ENCODE measurements at regions of chr11 and their contacts with region 1.

Region 1: GRCh38 chr11:93652161-93652597 is 9.3 kb upstream of the CEP295 start:
- DNase-seq: no peak
- ATAC-seq: peak; percentile 24; the same call in 1 of the 3 replicates
- H3K4me3 ChIP-seq: no peak overlapping the region
- H3K27ac ChIP-seq: no peak overlapping the region
- H3K4me1 ChIP-seq: no peaks in the 10 kb centered on the region
- H3K27me3 ChIP-seq: no peaks in the 10 kb centered on the region
- CTCF ChIP-seq: peak; percentile 46 to 68 (median 63)
- EP300 ChIP-seq: no peak
- POLR2A ChIP-seq: no peak
- RAD21 ChIP-seq: peak; percentile 68

Region 2: GRCh38 chr11:92941676-92942571 is 710.3 kb before region 1 on chr11:
- CTCF ChIA-PET with region 1: interaction called, 8 read pairs
- POLR2A ChIA-PET with region 1: no interaction called
- RAD21 ChIA-PET with region 1: no interaction called
- SMC1A ChIA-PET with region 1: no interaction called
- in situ Hi-C with region 1: loop called (anchors 10 kb)
- intact Hi-C with region 1: loop called (anchors 5 kb)
- DNase-seq: no peak
- ATAC-seq: peak; percentile 80
- H3K4me3 ChIP-seq: no peak overlapping the region
- H3K27ac ChIP-seq: no peak overlapping the region
- H3K4me1 ChIP-seq: no peaks in the 10 kb centered on the region
- H3K27me3 ChIP-seq: no peaks in the 10 kb centered on the region; a peak in 1 of 4 replicates
- CTCF ChIP-seq: peak; percentile 58 to 76 (median 73); a peak in 5 of 6 replicates
- EP300 ChIP-seq: no peak
- POLR2A ChIP-seq: no peak
- RAD21 ChIP-seq: peak; percentile 83

Region 3: GRCh38 chr11:93131709-93132108 is 520.5 kb before region 1 on chr11:
- CTCF ChIA-PET with region 1: no interaction called
- POLR2A ChIA-PET with region 1: no interaction called
- RAD21 ChIA-PET with region 1: no interaction called
- SMC1A ChIA-PET with region 1: no interaction called
- in situ Hi-C with region 1: loop called (anchors 10 kb)
- intact Hi-C with region 1: no loop called
- DNase-seq: no peak
- ATAC-seq: no peak
- H3K4me3 ChIP-seq: no peak overlapping the region
- H3K27ac ChIP-seq: no peak overlapping the region
- H3K4me1 ChIP-seq: no peaks in the 10 kb centered on the region
- H3K27me3 ChIP-seq: no peaks in the 10 kb centered on the region
- CTCF ChIP-seq: peak in 1 of 3 experiments; percentile 33; a peak in 2 of 6 replicates
- EP300 ChIP-seq: no peak
- POLR2A ChIP-seq: no peak
- RAD21 ChIP-seq: peak; percentile 49

Region 4: DNA sequence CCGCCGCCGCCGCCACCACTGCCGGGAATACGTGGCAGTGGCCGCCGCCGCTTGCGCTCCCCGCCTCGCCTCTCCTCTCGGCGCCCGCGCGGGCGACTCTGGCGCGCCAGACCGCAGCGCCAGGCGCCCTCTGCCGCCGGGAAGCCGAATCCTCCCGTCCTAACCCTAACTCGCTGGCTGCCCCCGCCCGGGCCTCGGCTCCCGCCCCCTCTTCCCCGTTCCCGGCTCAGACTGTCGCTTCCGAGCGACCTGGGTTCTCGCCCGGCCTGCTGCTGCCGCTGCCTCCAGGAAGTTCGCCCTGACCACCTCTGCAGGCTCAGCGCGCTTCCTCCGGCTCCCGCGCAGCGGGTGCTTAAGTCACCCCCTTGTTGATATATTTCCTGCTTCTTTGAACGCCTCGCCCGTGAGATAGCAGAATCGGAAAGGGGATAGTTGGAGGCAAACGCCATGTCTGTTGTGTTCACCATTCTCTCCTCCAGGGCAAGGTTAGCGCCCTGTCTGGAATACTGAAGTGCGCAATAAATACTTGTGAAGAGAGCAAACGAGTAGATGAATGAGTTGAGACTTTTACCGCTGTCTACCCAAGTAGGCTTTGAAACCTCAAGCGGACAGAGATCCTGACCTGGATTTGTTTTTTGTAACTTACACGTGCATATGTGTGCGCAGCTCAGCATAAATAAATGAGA is 108.7 kb before region 1 on chr11 and contains the start of gene SMCO4:
- CTCF ChIA-PET with region 1: interaction called, 22 read pairs
- POLR2A ChIA-PET with region 1: no interaction called
- RAD21 ChIA-PET with region 1: interaction called, 6 read pairs
- SMC1A ChIA-PET with region 1: interaction called, 4 read pairs
- in situ Hi-C with region 1: no loop called
- intact Hi-C with region 1: loop called (anchors 2 kb)
- DNase-seq: no peak
- ATAC-seq: peak; percentile 78
- H3K4me3 ChIP-seq: peak within 1 kb of the TSS; percentile 91
- H3K27ac ChIP-seq: peak within 1 kb of the TSS; percentile 45
- H3K4me1 ChIP-seq: peaks cover 12% of the 10 kb centered on the region
- H3K27me3 ChIP-seq: no peaks in the 10 kb centered on the region
- CTCF ChIP-seq: peak; percentile 52 to 90 (median 73)
- EP300 ChIP-seq: no peak
- POLR2A ChIP-seq: peak; percentile 58
- RAD21 ChIP-seq: peak; percentile 82
- polyA plus RNA-seq, gene SMCO4: 3.6 to 8.1 TPM

Region 5: DNA sequence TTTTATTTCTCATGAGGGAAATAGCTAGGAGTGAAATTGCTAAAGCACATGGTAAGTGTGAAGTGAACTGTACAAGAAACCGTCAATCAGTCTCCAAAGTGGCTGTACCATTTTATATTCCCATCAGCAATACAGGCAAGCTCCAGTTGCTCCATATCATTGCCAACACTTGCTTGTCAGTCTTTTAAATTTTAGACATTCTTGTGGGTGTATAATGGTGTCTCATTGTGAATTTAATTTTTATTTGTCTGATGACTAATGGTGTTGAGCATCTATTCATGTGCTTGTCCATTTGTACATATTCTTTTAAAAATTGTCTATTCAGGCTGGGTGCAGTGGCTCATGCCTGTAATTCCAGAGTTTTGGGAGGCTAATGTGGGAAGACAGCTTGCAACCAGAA is 74.9 kb before region 1 on chr11:
- CTCF ChIA-PET with region 1: no interaction called
- POLR2A ChIA-PET with region 1: no interaction called
- RAD21 ChIA-PET with region 1: no interaction called
- SMC1A ChIA-PET with region 1: no interaction called
- in situ Hi-C with region 1: no loop called
- intact Hi-C with region 1: no loop called
- DNase-seq: no peak
- ATAC-seq: no peak
- H3K4me3 ChIP-seq: no peak overlapping the region
- H3K27ac ChIP-seq: no peak overlapping the region
- H3K4me1 ChIP-seq: no peaks in the 10 kb centered on the region
- H3K27me3 ChIP-seq: no peaks in the 10 kb centered on the region
- CTCF ChIP-seq: no peak
- EP300 ChIP-seq: no peak
- POLR2A ChIP-seq: no peak
- RAD21 ChIP-seq: no peak

Region 6: DNA sequence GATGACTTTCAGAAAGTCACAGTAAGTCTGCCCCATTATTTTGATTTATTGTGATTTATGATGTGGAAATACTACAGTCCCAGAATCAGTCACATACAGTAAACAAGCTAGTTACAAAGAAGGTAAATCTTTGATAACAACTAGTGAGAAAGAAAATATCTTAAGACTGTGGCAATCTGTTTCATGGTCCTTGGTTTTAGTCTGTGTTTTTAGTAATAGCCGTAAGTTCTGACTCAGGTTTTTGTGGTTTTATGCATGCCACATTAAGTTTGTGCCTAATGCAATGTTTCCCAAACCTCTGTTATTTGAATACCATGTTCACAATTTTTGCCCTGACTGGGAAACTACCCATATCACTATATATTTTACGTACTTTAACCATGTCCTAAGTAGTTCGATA is 16.0 kb after region 1 on chr11:
- CTCF ChIA-PET with region 1: interaction called, 13 read pairs
- POLR2A ChIA-PET with region 1: no interaction called
- RAD21 ChIA-PET with region 1: interaction called, 4 read pairs
- SMC1A ChIA-PET with region 1: interaction called, 13 read pairs
- in situ Hi-C with region 1: no loop called
- intact Hi-C with region 1: no loop called
- DNase-seq: no peak
- ATAC-seq: peak; percentile 60
- H3K4me3 ChIP-seq: no peak overlapping the region
- H3K27ac ChIP-seq: peak overlapping the region; percentile 31; the same call in 1 of the 2 replicates
- H3K4me1 ChIP-seq: no peaks in the 10 kb centered on the region
- H3K27me3 ChIP-seq: no peaks in the 10 kb centered on the region
- CTCF ChIP-seq: no peak
- EP300 ChIP-seq: no peak
- POLR2A ChIP-seq: no peak
- RAD21 ChIP-seq: no peak

Region 7: DNA sequence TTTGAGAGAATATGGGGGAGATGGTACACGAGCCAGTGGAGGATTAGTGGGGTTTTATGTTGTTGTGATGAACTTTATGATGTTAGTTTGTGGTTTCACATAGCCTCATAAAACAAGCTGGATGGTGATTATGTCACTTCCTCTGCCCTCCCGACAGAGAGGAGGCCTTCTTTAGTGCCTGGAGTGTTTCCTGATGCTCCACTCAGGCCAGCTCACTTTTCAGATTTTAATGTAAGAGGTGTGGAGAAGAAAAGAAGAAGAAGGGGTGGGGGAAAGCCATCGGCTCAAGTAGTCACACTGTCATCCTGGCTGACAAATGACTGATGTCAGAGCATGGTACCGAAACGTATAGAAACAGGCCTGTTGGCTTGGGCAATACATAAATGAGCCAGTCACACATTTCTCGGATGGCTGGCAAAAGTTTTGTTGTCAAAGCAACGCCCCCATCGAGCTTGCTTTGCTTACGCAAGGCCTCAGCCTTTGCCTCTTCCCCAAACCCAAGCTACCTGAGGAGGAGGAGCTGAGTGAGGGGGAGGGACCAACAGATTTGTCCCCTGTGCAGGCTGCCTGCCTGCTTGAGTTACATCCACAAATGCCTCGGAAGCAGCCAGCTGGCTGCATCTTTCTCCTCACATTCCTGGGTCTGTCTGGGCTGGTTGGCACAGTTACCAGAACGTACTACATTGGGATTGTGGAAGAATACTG is 368.8 kb after region 1 on chr11 and contains the start of gene HEPHL1:
- CTCF ChIA-PET with region 1: no interaction called
- POLR2A ChIA-PET with region 1: no interaction called
- RAD21 ChIA-PET with region 1: no interaction called
- SMC1A ChIA-PET with region 1: no interaction called
- in situ Hi-C with region 1: no loop called
- intact Hi-C with region 1: no loop called
- DNase-seq: no peak
- ATAC-seq: no peak
- H3K4me3 ChIP-seq: no peak within 1 kb of the TSS
- H3K27ac ChIP-seq: no peak within 1 kb of the TSS
- H3K4me1 ChIP-seq: no peaks in the 10 kb centered on the region
- H3K27me3 ChIP-seq: no peaks in the 10 kb centered on the region
- CTCF ChIP-seq: no peak
- EP300 ChIP-seq: no peak
- POLR2A ChIP-seq: no peak
- RAD21 ChIP-seq: no peak
- polyA plus RNA-seq, gene HEPHL1: 0.02 to 0.08 TPM

Measured in GM12878 (cell line).